ENCODE measurements at regions of chr19 and their contacts with region 1.

Region 1: GRCh38 chr19:8832132-8833021 is at the starts of genes MBD3L1 and ZNF558:
- DNase-seq: peak; percentile 98 to 99
- ATAC-seq: peak; percentile 91 to 92
- H3K4me3 ChIP-seq: peak within 1 kb of the TSS; percentile 74 to 91 (median 83)
- H3K27ac ChIP-seq: peak within 1 kb of the TSS; percentile 91 to 96 (median 94)
- H3K4me1 ChIP-seq: peaks cover 8 to 12% of the 10 kb centered on the region in 2 donors
- H3K27me3 ChIP-seq: no peaks in the 10 kb centered on the region
- CTCF ChIP-seq: peak in 3 of 5 experiments; percentile 30 to 56 (median 42)
- POLR2A ChIP-seq: peak; percentile 82 to 92
- total RNA-seq, gene MBD3L1: not detected
- total RNA-seq, gene ZNF558: 14.4 to 24.5 (median 18.6) TPM

Region 2: GRCh38 chr19:7943444-7944176 is 888.8 kb before region 1 on chr19 and contains the start of gene TIMM44:
- in situ Hi-C with region 1: no loop called
- intact Hi-C with region 1: loop called (anchors 10 kb)
- DNase-seq: peak; percentile 100
- ATAC-seq: peak; percentile 97 to 98
- H3K4me3 ChIP-seq: peak within 1 kb of the TSS; percentile 67 to 97 (median 82)
- H3K27ac ChIP-seq: peak within 1 kb of the TSS; percentile 94 to 100 (median 98)
- H3K4me1 ChIP-seq: peaks cover 10 to 19% of the 10 kb centered on the region in 2 donors
- H3K27me3 ChIP-seq: no peaks in the 10 kb centered on the region
- CTCF ChIP-seq: no peak
- POLR2A ChIP-seq: peak; percentile 92 to 97
- total RNA-seq, gene TIMM44: 53.9 to 168 (median 94.1) TPM

Region 3: DNA sequence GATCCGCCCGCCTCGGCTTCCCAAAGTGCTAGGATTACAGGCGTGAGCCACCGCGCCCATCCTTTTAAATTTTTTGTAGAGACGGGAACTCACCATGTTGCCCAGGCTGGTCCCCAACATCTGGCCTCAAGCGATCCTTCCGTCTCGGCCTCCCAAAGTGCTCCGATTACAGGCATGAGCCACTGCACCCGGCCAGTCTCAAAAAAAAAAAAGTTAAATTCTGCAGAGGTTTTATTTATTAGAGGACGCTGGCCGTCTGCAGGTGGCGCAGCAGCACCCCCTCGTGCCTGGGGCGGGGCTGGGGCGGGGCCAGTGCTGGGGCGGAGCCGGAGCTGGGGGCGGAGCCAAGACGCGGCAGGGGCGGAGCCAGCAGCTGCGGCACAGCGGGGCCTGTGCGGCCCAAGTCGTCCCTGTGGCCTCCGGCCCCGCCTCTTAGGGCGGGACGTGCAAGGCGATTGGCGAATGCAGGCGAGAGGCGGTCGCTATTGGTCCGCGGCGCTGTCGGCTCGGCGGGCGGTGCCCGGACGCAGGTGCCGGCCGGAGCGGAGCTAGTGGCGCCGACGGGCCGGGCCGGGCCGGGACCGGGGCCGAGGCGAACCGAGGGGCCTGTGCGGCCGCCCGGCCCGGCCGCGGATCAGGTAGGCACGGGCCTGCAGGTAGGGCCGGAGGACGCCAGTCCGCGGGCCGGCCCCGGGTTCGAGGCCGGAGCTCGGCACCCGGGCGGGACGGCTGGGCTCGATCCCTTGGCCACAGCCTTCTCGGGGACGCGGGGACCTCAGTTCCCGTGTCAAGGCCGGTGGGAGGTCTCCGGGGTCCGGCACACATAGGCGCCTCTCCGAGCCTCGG is 419.4 kb before region 1 on chr19 and contains the start of gene MARCHF2:
- in situ Hi-C with region 1: no loop called
- intact Hi-C with region 1: loop called (anchors 5 kb)
- DNase-seq: peak; percentile 93 to 97
- ATAC-seq: peak; percentile 98 to 99
- H3K4me3 ChIP-seq: peak within 1 kb of the TSS; percentile 67 to 83 (median 69)
- H3K27ac ChIP-seq: peak within 1 kb of the TSS; percentile 65 to 86 (median 76)
- H3K4me1 ChIP-seq: peaks cover 14 to 27% of the 10 kb centered on the region in 2 donors
- H3K27me3 ChIP-seq: no peaks in the 10 kb centered on the region
- CTCF ChIP-seq: peak; percentile 14 to 84 (median 62)
- POLR2A ChIP-seq: peak; percentile 63 to 74
- total RNA-seq, gene MARCHF2: 173 to 183 (median 176) TPM

Region 4: GRCh38 chr19:9621156-9622037 is 789.0 kb after region 1 on chr19 and contains the start of gene ZNF561:
- in situ Hi-C with region 1: no loop called
- intact Hi-C with region 1: loop called (anchors 1 kb)
- DNase-seq: peak; percentile 70
- ATAC-seq: peak; percentile 96 to 98
- H3K4me3 ChIP-seq: peak within 1 kb of the TSS; percentile 70 to 96 (median 86)
- H3K27ac ChIP-seq: peak within 1 kb of the TSS; percentile 82 to 92 (median 90)
- H3K4me1 ChIP-seq: peaks cover 14 to 22% of the 10 kb centered on the region in 2 donors
- H3K27me3 ChIP-seq: no peaks in the 10 kb centered on the region
- CTCF ChIP-seq: no peak
- POLR2A ChIP-seq: no peak
- total RNA-seq, gene ZNF561: 8.7 to 17.5 (median 14.4) TPM

Region 5: DNA sequence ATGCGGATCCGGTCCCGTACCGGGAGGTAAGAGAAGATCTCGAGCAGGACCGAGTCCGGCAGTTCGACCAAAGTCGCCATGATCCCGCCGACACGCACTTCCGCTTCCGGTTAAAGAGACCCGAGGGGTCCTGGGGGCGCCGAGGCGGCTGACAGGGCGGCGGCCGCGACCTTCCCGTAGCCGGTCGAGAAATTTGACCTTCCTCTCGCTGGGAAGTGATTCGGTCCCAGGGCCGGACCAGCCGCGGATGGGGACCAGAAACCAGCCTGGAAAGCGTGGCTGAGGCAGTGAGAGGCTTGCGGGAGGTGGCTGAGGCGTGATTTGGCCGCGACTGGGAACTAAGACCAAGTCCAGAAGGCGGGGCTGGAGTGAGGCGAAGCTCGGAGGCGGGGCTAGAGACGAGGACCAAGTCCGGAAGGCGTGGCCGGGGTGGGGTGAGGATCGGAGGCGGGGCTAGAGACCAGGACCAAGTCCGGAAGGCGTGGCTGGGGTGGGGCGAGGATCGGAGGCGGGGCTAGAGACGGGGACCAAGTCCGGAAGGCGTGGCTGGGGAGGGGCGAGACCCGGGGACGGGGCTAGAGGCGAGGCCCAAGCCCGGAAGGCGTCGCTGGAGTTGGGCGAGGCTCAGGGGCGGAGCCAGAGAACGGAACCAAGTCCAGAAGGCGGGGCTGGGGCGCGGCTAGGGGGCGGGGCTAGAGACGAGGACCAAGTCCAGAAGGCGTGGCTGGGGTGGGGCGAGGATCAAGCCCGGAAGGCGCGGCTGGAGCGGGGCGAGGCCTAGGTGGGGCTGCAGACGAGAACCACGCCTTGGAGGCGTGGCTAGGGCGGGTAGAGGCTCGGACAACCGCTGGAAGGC is 986.6 kb after region 1 on chr19 and contains the start of gene FBXL12:
- in situ Hi-C with region 1: no loop called
- intact Hi-C with region 1: loop called (anchors 5 kb)
- DNase-seq: peak; percentile 100
- ATAC-seq: peak; percentile 88 to 91
- H3K4me3 ChIP-seq: peak within 1 kb of the TSS; percentile 93 to 100 (median 95)
- H3K27ac ChIP-seq: peak within 1 kb of the TSS; percentile 91 to 100 (median 98)
- H3K4me1 ChIP-seq: peaks cover 10 to 23% of the 10 kb centered on the region in 2 donors
- H3K27me3 ChIP-seq: no peaks in the 10 kb centered on the region
- CTCF ChIP-seq: no peak
- POLR2A ChIP-seq: peak; percentile 71 to 79
- total RNA-seq, gene FBXL12: 7.6 to 28.4 (median 15.1) TPM

Measured in gastrocnemius medialis (tissue), 4 donors.